HEK293 (cell line): ENCODE measurements at regions of chr17 and their contacts with region 1.

Region 1: DNA sequence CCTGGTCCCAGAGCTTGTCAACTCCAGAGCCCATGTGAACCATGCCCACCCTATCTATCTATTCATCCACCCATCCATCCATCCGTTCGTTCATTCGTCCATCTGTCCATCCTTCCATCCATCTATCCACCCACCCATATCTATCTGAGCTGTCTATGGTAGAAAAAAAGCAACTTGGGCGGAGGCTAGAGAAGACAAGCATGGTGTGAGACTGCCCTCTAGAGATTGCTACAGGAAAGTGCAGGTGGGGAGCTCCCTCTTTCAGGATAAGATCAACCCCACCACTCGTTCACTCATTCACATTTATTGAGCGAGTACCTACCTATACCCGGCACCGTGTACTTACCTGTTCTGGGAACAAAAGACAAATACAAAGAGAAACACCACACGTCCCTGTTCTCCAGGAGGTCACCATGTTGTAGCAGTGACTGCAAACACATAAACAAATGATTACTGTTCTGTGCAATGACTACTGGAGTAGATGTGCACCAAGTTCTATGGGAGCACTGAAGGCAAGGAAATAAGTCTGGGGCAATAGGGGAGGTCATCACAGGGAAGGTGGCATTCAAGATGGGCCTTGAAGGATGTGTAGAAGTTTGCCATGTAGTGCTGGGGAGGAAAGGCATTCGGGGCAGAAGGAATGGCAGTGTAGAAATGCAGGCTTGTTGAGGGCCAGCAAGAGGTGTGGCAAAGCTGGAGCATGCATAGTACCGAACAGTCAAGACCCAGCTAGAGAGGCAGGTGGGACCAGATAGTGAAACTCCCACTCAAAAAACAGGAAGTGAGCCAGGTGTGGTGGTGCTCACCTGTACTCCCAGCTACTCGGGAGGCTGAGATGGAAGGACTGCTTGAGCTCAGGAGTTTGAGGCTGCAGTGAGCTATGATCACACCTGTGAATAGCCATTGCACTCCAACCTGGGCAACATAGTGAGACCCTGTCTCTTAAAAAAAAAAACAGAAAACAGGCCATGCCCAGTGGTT is 13.4 kb upstream of the ATP5MC1 start:
- H3K4me3 ChIP-seq: no peak overlapping the region
- H3K27ac ChIP-seq: no peak overlapping the region
- H3K4me1 ChIP-seq: no peaks in the 10 kb centered on the region
- CTCF ChIP-seq: peak; percentile 94

Region 2: GRCh38 chr17:48678141-48678971 is 200.9 kb before region 1 on chr17:
- CTCF ChIA-PET with region 1: interaction called, 365 read pairs
- POLR2A ChIA-PET with region 1: interaction called, 7 read pairs
- H3K4me3 ChIP-seq: no peak overlapping the region
- H3K27ac ChIP-seq: no peak overlapping the region
- H3K4me1 ChIP-seq: no peaks in the 10 kb centered on the region
- CTCF ChIP-seq: peak; percentile 98

Region 3: DNA sequence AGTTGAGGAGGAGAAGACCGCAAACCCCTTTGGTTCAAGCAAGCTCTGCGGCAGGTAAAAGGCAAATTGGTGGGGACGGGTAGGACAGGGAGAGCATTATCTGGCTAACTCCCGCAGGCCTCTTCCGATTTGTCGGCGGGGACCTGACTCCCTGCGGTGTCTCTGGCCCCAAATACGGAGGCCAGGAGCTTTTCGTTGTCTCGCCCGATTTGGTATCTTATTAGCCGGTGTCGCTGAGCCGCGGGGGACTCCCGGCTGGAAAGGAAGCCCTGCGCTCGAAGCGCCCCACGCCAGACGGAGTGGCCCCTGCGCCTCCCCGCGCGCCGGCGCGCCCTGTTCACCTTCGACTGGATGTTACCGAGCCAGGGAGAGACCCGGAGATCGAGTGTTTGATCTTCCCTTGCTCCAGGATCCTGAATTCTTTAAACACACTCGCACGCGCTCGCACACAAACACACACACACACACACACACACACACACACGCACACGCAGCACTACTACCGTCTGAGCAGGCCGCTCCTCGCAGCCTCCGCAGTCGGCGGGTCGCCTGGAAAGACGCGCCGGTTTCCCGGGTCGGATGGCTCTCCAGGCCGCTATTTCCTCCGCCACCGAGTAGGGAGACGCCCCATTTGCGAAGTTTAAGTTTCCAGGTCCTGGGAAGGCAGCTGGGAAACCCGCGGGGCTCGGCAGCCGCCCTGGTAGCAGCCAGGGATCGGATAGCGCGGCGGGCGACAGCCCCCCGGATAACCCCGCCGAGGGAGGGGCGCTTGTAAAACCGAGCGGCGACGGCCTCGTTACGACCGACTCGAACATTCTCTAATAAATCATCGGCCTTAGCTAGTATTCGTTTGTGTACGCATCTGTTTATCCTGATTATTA is 160.2 kb before region 1 on chr17:
- CTCF ChIA-PET with region 1: interaction called, 66 read pairs
- POLR2A ChIA-PET with region 1: no interaction called
- H3K4me3 ChIP-seq: peak overlapping the region; percentile 32
- H3K27ac ChIP-seq: no peak overlapping the region
- H3K4me1 ChIP-seq: no peaks in the 10 kb centered on the region
- CTCF ChIP-seq: no peak

Region 4: GRCh38 chr17:48804925-48805411 is 74.2 kb before region 1 on chr17:
- CTCF ChIA-PET with region 1: interaction called, 387 read pairs
- POLR2A ChIA-PET with region 1: interaction called, 5 read pairs
- H3K4me3 ChIP-seq: no peak overlapping the region
- H3K27ac ChIP-seq: no peak overlapping the region
- H3K4me1 ChIP-seq: peaks cover 4% of the 10 kb centered on the region
- CTCF ChIP-seq: peak; percentile 76

Region 5: DNA sequence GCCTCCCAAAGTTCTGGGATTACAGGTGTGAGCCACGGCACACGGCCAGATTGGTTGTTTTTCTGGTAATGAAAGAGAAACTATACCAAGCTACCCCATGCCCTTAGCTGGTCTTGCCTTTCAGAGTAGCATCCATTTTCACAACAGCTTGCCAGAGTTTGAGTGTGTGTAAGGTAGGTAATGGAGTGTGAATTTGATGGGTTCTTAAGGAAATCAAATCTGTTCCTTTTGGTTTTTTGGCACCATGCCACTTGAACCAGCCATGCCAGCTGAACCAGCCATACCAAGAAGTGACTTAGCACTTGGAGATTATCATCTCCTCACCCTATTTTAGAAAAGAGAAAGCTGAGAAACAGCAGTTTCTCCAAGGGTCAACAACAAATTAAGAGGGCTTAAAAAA is 43.2 kb before region 1 on chr17:
- CTCF ChIA-PET with region 1: interaction called, 19 read pairs
- POLR2A ChIA-PET with region 1: no interaction called
- H3K4me3 ChIP-seq: no peak overlapping the region
- H3K27ac ChIP-seq: no peak overlapping the region
- H3K4me1 ChIP-seq: peaks cover 3% of the 10 kb centered on the region; the same call in 1 of the 2 replicates
- CTCF ChIP-seq: no peak

Region 6: DNA sequence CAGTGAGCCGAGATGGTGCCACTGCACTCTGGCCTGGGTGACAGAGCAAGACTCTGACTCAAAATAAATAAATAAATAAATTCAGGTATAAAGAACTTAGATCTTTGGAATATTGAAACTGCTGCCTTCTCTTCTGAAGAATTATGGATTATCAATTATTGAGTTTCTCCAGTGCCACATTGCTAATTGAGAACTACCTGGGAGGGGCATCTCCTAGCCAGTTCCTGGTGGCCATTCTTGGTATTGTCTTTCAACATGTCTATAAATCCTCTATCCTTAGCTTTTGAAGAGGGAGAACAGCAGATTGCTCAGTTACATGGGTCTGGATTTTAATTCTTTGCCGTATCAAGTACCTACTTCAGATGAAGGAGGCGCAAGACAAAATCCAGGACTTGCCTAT is 19.2 kb before region 1 on chr17:
- CTCF ChIA-PET with region 1: interaction called, 50 read pairs
- POLR2A ChIA-PET with region 1: interaction called, 3 read pairs
- H3K4me3 ChIP-seq: no peak overlapping the region
- H3K27ac ChIP-seq: no peak overlapping the region
- H3K4me1 ChIP-seq: no peaks in the 10 kb centered on the region
- CTCF ChIP-seq: no peak